Right cardiac atrium (tissue), 5 donors: ENCODE measurements at regions of chr6 and their contacts with region 1.

Region 1: DNA sequence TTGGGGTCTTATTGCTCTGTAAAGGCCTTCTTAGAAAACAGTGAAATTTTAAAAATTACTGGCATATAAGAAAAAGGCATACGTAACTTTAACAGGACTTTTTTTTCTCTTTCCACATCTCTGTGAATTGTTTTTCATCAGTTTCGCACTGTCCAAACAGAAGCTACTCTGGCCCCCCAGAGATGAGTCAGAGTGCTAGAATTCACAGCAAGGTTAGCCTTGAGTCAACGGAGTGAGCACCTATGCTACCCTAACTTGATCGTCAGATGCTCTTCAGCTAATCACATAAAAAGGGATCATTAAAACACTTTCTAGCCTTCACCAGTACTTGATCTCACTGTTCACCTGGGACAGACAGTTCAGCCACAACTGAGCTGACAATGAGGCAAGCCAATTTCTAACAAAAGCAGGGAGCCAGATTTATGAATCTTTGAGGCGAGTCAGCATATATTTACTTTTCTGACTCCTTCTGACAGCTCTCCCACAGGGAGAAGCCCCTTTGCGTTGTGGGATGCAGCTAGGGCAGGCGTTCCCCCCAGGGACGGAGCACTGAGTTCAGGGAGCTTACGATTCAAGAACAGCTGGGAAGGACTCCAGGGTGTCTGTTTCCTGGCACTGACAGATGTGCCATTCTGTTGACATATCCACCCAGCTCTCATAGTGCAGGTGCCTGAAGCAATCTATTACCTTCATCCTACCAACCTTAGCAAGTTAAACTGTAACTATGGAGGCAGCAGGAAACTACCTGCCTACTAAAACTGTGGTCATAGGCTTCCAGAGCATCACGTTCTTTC is 46.4 kb upstream of the SPDEF start:
- DNase-seq: no peak
- ATAC-seq: peak; percentile 30 to 32
- H3K4me3 ChIP-seq: no peak overlapping the region
- H3K27ac ChIP-seq: no peak overlapping the region
- H3K4me1 ChIP-seq: peaks cover 15% of the 10 kb centered on the region
- H3K27me3 ChIP-seq: no peaks in the 10 kb centered on the region

Region 2: DNA sequence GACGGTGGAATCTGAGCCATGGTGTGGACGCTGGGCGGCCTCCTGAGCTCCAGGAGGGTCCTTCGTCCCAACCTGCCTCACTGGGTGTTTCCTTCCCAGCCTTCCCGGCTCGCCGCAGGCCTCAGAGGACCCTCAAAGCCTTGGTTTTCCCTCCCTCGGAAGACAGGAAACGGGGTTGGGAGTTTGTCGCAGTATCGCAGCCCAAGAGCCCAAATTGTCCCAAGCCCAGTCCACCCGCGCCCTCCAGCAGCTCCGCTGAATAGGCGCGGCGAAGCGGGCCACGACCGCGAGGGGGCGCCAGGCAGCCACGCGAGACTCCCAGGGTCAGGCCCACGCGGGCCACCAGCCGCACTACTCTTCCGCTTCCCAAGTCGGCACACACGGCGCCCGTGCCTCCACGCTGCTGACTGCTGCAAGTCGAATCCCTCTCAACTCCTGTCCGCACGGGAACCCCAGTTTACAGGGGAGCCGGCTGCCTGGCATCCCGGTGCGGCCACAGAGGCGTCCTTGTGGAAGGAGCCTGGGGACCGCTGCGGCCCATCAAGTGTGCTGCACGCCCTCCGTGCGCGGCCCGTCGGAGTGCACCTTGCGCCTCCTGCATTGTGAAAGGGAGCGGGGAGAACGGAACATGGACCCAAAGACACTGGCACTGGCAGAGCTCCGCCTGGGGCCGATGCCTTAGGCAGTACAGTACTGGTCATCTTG is 406.2 kb before region 1 on chr6:
- intact Hi-C with region 1: loop called in 1 of 4 experiments (anchors 10 kb)
- DNase-seq: peak; percentile 86 to 97 (median 96)
- ATAC-seq: peak; percentile 98 to 99
- H3K4me3 ChIP-seq: peak overlapping the region; percentile 55
- H3K27ac ChIP-seq: no peak overlapping the region
- H3K4me1 ChIP-seq: no peaks in the 10 kb centered on the region
- H3K27me3 ChIP-seq: no peaks in the 10 kb centered on the region

Region 3: DNA sequence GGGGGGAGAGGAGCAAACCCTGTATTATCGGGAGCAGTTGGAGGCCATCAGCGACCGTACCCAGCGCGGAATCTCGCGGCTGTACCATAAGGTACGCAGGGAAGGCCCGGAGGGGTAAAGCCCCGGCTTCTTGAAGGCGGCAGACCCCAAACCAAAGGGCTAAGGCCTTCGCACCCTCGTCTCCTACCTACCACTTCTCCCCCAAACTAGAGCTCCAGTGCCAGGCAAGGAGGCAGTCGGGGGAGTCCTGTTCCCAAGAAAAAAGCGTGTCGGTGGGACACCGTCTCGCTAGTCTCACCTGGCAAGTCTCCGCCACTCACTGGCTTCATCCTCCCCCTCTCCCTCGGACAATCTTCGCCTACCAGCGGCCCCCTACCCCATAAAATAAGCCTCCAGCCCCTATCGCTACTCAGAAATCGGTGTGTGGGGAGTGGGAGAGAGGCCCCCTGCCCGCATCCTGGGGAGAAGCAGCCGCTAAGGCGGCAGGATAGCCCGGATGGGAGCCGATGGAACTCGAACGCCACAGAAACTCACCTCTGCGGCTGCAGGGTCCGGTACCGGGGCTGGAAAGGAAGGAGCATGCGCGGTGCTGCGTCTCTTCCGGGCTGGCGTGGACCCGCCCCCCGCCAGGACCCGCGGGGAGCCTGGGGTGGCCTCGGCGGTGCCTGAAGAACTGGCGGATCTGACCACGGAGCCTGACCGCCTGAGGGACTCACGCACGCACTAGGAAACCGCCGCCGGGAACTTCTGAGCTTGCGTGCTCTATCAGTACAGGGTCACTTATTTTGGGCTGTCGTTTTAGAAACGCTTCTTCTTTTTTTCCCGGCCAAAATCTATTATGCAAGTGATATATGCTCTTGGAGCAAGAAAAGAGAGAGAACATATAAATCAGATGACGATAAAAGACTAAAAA is 176.8 kb before region 1 on chr6 and contains the start of gene RPS10:
- intact Hi-C with region 1: loop called in 1 of 4 experiments (anchors 10 kb)
- DNase-seq: peak; percentile 95 to 98 (median 98)
- ATAC-seq: peak; percentile 98 to 99
- H3K4me3 ChIP-seq: peak within 1 kb of the TSS; percentile 93
- H3K27ac ChIP-seq: peak within 1 kb of the TSS; percentile 65
- H3K4me1 ChIP-seq: peaks cover 3% of the 10 kb centered on the region
- H3K27me3 ChIP-seq: no peaks in the 10 kb centered on the region
- total RNA-seq, gene RPS10: 730 to 882 (median 787) TPM

Region 4: GRCh38 chr6:34459899-34460593 is 142.5 kb before region 1 on chr6:
- intact Hi-C with region 1: loop called in 3 of 4 experiments (anchors 10 kb)
- DNase-seq: no peak
- ATAC-seq: peak; percentile 40 to 50
- H3K4me3 ChIP-seq: no peak overlapping the region
- H3K27ac ChIP-seq: no peak overlapping the region
- H3K4me1 ChIP-seq: no peaks in the 10 kb centered on the region
- H3K27me3 ChIP-seq: no peaks in the 10 kb centered on the region

Region 5: GRCh38 chr6:34526992-34527728 is 75.4 kb before region 1 on chr6:
- intact Hi-C with region 1: loop called (anchors 5 to 10 kb)
- DNase-seq: peak; percentile 96 to 99 (median 99)
- ATAC-seq: peak; percentile 93 to 95
- H3K4me3 ChIP-seq: no peak overlapping the region
- H3K27ac ChIP-seq: no peak overlapping the region
- H3K4me1 ChIP-seq: no peaks in the 10 kb centered on the region
- H3K27me3 ChIP-seq: no peaks in the 10 kb centered on the region